ENCODE measurements at regions of chr9 and their contacts with region 1.

Region 1: GRCh38 chr9:108761655-108762347 is 94.0 kb downstream of the ACTL7B start:
- H3K4me3 Mint-ChIP-seq: no peak overlapping the region
- H3K27ac Mint-ChIP-seq: no peak overlapping the region
- H3K4me1 Mint-ChIP-seq: peaks cover 4% of the 10 kb centered on the region
- H3K27me3 Mint-ChIP-seq: no peaks in the 10 kb centered on the region

Region 2: GRCh38 chr9:107421947-107422793 is 1339.6 kb before region 1 on chr9:
- intact Hi-C with region 1: loop called (anchors 2 kb)
- H3K4me3 Mint-ChIP-seq: no peak overlapping the region
- H3K27ac Mint-ChIP-seq: no peak overlapping the region
- H3K4me1 Mint-ChIP-seq: peaks cover 14% of the 10 kb centered on the region
- H3K27me3 Mint-ChIP-seq: peaks cover 11% of the 10 kb centered on the region

Region 3: DNA sequence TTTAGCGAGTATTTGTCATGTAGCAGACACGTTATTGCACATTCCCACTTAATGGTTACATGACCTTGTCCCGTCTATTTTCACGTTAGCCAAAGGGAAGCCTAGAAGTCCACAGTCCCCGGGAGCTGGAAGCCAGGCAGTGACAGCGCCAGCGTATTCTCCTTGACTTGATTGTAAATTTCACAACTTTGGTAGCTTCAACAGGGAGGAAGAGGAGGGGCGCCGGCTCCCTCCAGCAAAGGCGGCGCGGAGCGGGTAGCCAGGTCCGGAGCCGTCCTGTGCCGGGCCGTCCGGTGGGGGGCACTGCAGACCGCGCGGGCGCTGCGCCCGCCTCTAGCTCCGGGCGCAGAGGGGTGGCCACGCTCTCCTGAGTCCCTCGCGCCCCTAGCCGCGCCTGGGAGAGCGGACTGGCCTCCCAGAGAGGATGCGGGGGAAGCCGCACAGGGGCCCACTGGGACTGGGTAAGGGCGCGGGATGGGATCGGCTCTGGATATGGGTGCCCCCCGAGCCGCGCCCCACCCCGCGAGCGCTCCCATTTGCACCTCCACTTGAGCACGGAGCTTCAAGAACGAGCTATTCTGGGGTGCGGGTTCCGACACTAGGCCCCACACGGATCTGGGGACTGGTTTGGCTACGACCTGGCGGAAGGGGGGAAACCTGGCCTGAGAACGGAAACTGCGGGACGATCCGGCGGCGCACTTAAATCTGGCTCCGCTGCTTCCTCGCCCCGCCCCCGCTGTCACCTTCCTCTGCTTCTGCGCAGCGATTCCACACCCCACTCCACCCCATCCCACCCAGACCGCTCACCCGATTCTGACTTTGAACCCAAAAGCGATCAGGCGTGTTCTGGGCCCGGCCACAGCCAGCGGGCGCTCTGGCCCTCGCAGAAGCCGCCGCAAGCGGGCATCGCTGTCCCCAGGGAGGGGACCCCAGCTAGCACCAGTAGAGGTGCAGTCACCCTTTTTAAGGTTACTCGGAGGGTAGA is 1296.0 kb before region 1 on chr9:
- intact Hi-C with region 1: loop called (anchors 2 kb)
- H3K4me3 Mint-ChIP-seq: peak overlapping the region; percentile 81
- H3K27ac Mint-ChIP-seq: peak overlapping the region; percentile 67
- H3K4me1 Mint-ChIP-seq: peaks cover 5% of the 10 kb centered on the region
- H3K27me3 Mint-ChIP-seq: peaks cover 17% of the 10 kb centered on the region

Region 4: DNA sequence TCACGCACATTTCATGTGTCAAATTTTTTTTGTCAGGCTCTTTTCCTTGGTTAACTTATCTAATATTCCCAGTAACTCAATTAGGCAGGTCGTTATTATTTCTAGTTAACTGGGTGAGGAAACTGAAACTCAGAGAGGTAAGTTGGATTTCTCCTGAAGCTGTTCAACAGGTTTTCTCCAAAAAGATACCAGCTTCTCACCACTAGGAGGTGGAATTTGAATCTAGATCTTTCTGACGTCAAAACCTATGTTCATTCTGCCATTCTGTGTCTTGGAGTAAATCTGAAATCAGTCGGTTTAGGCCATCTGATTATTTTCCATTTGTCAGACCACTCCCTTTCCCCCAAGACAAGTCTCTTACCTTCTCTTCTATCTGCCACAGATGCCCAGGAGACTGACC is 478.9 kb before region 1 on chr9:
- intact Hi-C with region 1: loop called (anchors 10 kb)
- H3K4me3 Mint-ChIP-seq: no peak overlapping the region
- H3K27ac Mint-ChIP-seq: no peak overlapping the region
- H3K4me1 Mint-ChIP-seq: no peaks in the 10 kb centered on the region
- H3K27me3 Mint-ChIP-seq: peaks cover 2% of the 10 kb centered on the region

Measured in dendritic cell treated with granulocyte-macrophage colony-stimulating factor and Interleukin-4, amounts not matched to agents 40 ng/mL and 50 ng/mL, for 4 days (primary cell).